ENCODE measurements at regions of chr15 and their contacts with region 1.

Region 1: GRCh38 chr15:32651229-32651837 is 9.8 kb downstream of the SCG5 start:
- DNase-seq: peak in 4 of 5 donors; percentile 31 to 40 (median 36)
- H3K4me3 ChIP-seq: no peak overlapping the region
- H3K4me3 Mint-ChIP-seq: no peak overlapping the region
- H3K27ac ChIP-seq: no peak overlapping the region
- H3K27ac Mint-ChIP-seq: no peak overlapping the region
- H3K4me1 ChIP-seq: no peaks in the 10 kb centered on the region
- H3K4me1 Mint-ChIP-seq: no peaks in the 10 kb centered on the region
- H3K27me3 ChIP-seq: no peaks in the 10 kb centered on the region
- H3K27me3 Mint-ChIP-seq: no peaks in the 10 kb centered on the region

Region 2: DNA sequence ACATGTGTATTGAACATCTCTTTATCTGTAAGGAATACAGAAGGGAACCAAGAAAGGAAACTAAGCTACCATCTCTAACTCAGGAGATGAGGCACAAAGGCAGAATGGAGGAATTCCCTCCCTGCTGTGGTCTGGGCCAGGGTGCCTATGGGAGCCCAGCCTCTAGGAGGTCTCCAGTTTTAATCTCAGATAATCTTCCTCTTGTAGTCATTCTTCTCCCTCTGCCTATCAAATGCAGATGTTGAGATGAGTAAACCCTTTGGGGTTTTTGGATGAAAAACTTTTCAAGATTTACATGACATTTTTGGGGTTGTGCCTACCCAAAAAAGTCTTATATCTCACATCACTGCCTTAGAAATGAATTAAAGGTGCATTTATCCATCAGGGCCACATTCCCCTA is 13.5 kb after region 1 on chr15:
- CTCF ChIA-PET with region 1: interaction called, 71 read pairs
- POLR2A ChIA-PET with region 1: no interaction called
- intact Hi-C with region 1: no loop called
- DNase-seq: no peak
- H3K4me3 ChIP-seq: no peak overlapping the region
- H3K4me3 Mint-ChIP-seq: no peak overlapping the region
- H3K27ac ChIP-seq: no peak overlapping the region
- H3K27ac Mint-ChIP-seq: no peak overlapping the region
- H3K4me1 ChIP-seq: no peaks in the 10 kb centered on the region
- H3K4me1 Mint-ChIP-seq: peaks cover 5 to 6% (median 5%) of the 10 kb centered on the region in 4 donors
- H3K27me3 ChIP-seq: no peaks in the 10 kb centered on the region
- H3K27me3 Mint-ChIP-seq: no peaks in the 10 kb centered on the region

Region 3: DNA sequence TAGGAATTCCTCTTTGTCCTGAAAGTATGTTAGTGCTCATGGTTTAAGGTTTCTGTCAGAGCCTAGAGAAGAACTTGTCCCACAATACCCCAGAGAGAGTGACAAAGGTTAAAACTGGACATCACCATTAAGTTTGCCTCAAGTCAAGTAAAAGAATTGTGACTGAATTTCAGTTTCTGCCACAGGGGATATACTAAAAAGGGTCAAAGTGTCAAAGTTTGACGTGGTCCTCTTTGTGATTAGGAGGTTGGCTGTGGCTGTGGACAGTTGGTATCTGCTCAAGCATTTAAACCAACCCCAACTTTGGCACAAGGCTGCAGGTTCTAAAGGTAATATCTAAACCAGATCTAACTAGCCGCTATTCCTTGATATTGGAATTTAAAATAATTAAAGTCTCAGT is 517.1 kb after region 1 on chr15:
- CTCF ChIA-PET with region 1: no interaction called
- POLR2A ChIA-PET with region 1: no interaction called
- intact Hi-C with region 1: no loop called
- DNase-seq: no peak
- H3K4me3 ChIP-seq: no peak overlapping the region
- H3K4me3 Mint-ChIP-seq: no peak overlapping the region
- H3K27ac ChIP-seq: no peak overlapping the region
- H3K27ac Mint-ChIP-seq: peak overlapping the region in 1 of 7 donors; percentile 15
- H3K4me1 ChIP-seq: no peaks in the 10 kb centered on the region
- H3K4me1 Mint-ChIP-seq: no peaks in the 10 kb centered on the region
- H3K27me3 ChIP-seq: no peaks in the 10 kb centered on the region
- H3K27me3 Mint-ChIP-seq: peaks cover 6 to 7% of the 10 kb centered on the region in 2 donors

Measured in CD4-positive, alpha-beta memory T cell (primary cell).